Natural killer cell (primary cell): ENCODE measurements at regions of chr20 and their contacts with region 1.

Region 1: GRCh38 chr20:19185090-19185489 is 27.4 kb upstream of the SLC24A3 start:
- DNase-seq: no peak
- ATAC-seq: peak in 1 of 3 donors; percentile 40
- H3K4me3 ChIP-seq: no peak overlapping the region
- H3K4me3 Mint-ChIP-seq: no peak overlapping the region
- H3K27ac ChIP-seq: no peak overlapping the region
- H3K27ac Mint-ChIP-seq: no peak overlapping the region
- H3K4me1 ChIP-seq: no peaks in the 10 kb centered on the region
- H3K4me1 Mint-ChIP-seq: no peaks in the 10 kb centered on the region
- H3K27me3 ChIP-seq: no peaks in the 10 kb centered on the region
- H3K27me3 Mint-ChIP-seq: no peaks in the 10 kb centered on the region
- CTCF ChIP-seq: peak; percentile 17

Region 2: GRCh38 chr20:18412221-18412901 is 772.7 kb before region 1 on chr20:
- intact Hi-C with region 1: loop called (anchors 10 kb)
- DNase-seq: no peak
- ATAC-seq: no peak
- H3K4me3 ChIP-seq: no peak overlapping the region
- H3K4me3 Mint-ChIP-seq: no peak overlapping the region
- H3K27ac ChIP-seq: no peak overlapping the region
- H3K27ac Mint-ChIP-seq: no peak overlapping the region
- H3K4me1 ChIP-seq: no peaks in the 10 kb centered on the region
- H3K4me1 Mint-ChIP-seq: peaks cover 5% of the 10 kb centered on the region in 2 donors
- H3K27me3 ChIP-seq: no peaks in the 10 kb centered on the region
- H3K27me3 Mint-ChIP-seq: no peaks in the 10 kb centered on the region
- CTCF ChIP-seq: no peak

Region 3: GRCh38 chr20:19427514-19428312 is 242.6 kb after region 1 on chr20:
- intact Hi-C with region 1: no loop called
- DNase-seq: no peak
- ATAC-seq: no peak
- H3K4me3 ChIP-seq: no peak overlapping the region
- H3K4me3 Mint-ChIP-seq: no peak overlapping the region
- H3K27ac ChIP-seq: no peak overlapping the region
- H3K27ac Mint-ChIP-seq: no peak overlapping the region
- H3K4me1 ChIP-seq: no peaks in the 10 kb centered on the region
- H3K4me1 Mint-ChIP-seq: peaks cover 9 to 12% of the 10 kb centered on the region in 2 donors
- H3K27me3 ChIP-seq: peaks cover 2% of the 10 kb centered on the region
- H3K27me3 Mint-ChIP-seq: peaks cover 6 to 8% of the 10 kb centered on the region in 2 donors
- CTCF ChIP-seq: no peak